ENCODE measurements at regions of chr16 and their contacts with region 1.

Region 1: DNA sequence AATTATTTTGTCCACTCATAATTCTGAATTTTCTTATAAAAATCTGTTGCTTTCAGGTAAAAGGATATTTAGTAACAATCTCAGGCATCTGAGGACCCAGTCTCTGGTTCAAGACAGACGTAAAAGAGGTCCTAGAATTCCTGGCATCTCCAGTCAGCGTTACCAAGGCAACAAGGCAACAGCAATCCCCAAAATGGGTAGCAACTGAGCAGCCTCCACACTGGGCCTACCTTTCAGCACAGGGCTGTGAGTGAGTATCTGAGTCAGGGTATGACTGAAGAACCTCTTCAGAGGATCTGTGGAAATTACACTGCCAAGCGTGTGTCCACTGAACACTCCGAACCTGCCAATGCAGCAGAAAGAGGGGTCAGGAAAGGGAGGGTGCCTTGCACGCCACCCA is 20.8 kb downstream of the FANCA start:
- DNase-seq: no peak
- ATAC-seq: no peak
- H3K4me3 ChIP-seq: no peak overlapping the region
- H3K4me3 Mint-ChIP-seq: no peak overlapping the region
- H3K27ac ChIP-seq: no peak overlapping the region
- H3K27ac Mint-ChIP-seq: no peak overlapping the region
- H3K4me1 ChIP-seq: peaks cover 0 to 4% of the 10 kb centered on the region in 2 donors
- H3K4me1 Mint-ChIP-seq: peaks cover 2% of the 10 kb centered on the region
- H3K27me3 ChIP-seq: no peaks in the 10 kb centered on the region
- H3K27me3 Mint-ChIP-seq: no peaks in the 10 kb centered on the region
- CTCF ChIP-seq: no peak

Region 2: GRCh38 chr16:89507834-89508590 is 287.7 kb before region 1 on chr16 and contains the start of gene SPG7:
- CTCF ChIA-PET with region 1: no interaction called
- POLR2A ChIA-PET with region 1: no interaction called
- intact Hi-C with region 1: no loop called
- DNase-seq: peak; percentile 95
- ATAC-seq: peak; percentile 75
- H3K4me3 ChIP-seq: peak within 1 kb of the TSS; percentile 61 to 92 (median 73)
- H3K4me3 Mint-ChIP-seq: peak within 1 kb of the TSS; percentile 94
- H3K27ac ChIP-seq: peak within 1 kb of the TSS; percentile 71 to 87
- H3K27ac Mint-ChIP-seq: peak within 1 kb of the TSS; percentile 88
- H3K4me1 ChIP-seq: peaks cover 34 to 38% of the 10 kb centered on the region in 2 donors
- H3K4me1 Mint-ChIP-seq: peaks cover 31% of the 10 kb centered on the region
- H3K27me3 ChIP-seq: no peaks in the 10 kb centered on the region
- H3K27me3 Mint-ChIP-seq: no peaks in the 10 kb centered on the region
- CTCF ChIP-seq: no peak
- total RNA-seq, gene SPG7: 146 and 153 TPM in 2 replicates

Region 3: DNA sequence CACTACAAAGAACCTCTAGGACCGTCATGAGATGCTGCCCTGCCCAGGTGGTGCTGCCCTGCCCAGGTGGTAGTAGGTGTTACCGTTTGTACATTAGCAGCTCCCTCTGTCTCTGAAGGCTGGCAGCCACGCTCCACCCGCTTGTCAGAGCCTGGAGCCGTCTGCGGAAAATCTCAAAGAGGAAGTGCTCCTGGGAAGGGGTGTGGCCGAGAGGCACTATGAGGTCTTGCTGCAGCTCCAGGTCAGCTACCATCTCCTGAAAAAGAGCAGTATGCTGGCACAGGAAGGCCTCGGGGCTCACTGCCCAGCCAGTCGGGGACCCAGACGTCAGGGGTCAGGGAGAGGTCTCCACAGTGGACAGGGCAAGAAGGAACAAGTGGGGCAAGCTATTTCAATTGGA is 46.0 kb before region 1 on chr16:
- CTCF ChIA-PET with region 1: interaction called, 31 read pairs
- POLR2A ChIA-PET with region 1: no interaction called
- intact Hi-C with region 1: no loop called
- DNase-seq: peak; percentile 33
- ATAC-seq: peak; percentile 17
- H3K4me3 ChIP-seq: no peak overlapping the region
- H3K4me3 Mint-ChIP-seq: no peak overlapping the region
- H3K27ac ChIP-seq: peak overlapping the region in 1 of 2 donors; percentile 36
- H3K27ac Mint-ChIP-seq: no peak overlapping the region
- H3K4me1 ChIP-seq: peaks cover 4 to 6% of the 10 kb centered on the region in 2 donors
- H3K4me1 Mint-ChIP-seq: peaks cover 8% of the 10 kb centered on the region
- H3K27me3 ChIP-seq: no peaks in the 10 kb centered on the region
- H3K27me3 Mint-ChIP-seq: no peaks in the 10 kb centered on the region
- CTCF ChIP-seq: no peak

Measured in B cell (primary cell).